Ascending aorta (tissue), 2 donors: ENCODE measurements at regions of chr12 and their contacts with region 1.

Region 1: GRCh38 chr12:79690638-79691493 is at the start of gene PAWR:
- DNase-seq: peak in 1 of 2 donors; percentile 81
- H3K4me3 ChIP-seq: peak within 1 kb of the TSS; percentile 96 to 99
- H3K27ac ChIP-seq: peak within 1 kb of the TSS; percentile 93 to 99
- H3K4me1 ChIP-seq: peaks cover 0 to 7% of the 10 kb centered on the region in 2 donors
- H3K27me3 ChIP-seq: no peaks in the 10 kb centered on the region
- CTCF ChIP-seq: peak; percentile 2 to 44 (median 3)
- total RNA-seq, gene PAWR: 75.4 TPM

Region 2: DNA sequence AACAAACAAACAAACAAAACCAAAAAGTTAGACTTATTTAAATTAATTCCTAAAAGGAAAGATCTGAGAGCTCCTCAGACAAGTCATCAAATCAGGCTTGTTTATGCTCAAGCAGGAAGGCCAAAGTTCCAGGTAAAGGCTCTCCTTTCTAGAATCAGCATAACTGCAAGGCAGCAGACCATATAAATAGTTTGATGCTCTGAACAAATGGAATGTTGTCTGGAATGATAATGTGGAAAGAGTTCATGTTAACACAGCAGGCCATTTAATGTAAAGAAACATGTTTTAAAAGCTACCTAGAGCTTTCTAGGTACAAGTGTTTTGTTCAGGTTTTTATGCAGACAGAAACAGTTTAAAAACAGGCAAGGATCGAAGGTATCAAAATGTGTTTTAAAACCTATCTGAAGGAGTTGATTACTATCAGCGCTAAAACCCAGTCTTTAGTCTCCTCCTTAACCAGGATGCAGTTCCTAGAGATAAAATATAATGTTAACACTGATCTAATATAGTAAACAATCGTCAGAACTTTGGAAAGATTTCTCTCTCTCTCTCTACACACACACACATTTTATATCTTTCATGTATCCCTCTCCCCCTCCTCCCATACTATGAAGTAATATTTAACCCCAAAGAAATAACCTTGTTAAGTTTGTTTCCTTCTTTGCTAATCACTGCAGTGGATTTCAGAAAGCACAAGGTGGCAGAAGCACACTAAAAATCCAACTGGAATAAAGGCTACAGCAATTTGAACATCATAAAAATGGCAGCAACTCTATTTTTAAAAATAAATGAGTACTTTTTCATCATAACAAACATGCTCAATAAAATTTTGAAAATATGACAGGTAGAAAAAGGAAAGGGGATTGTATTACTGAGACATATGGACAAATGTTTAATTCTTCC is 135.6 kb before region 1 on chr12:
- intact Hi-C with region 1: loop called (anchors 2 kb)
- DNase-seq: no peak
- H3K4me3 ChIP-seq: no peak overlapping the region
- H3K27ac ChIP-seq: peak overlapping the region; percentile 67 to 76
- H3K4me1 ChIP-seq: peaks cover 3 to 59% of the 10 kb centered on the region in 2 donors
- H3K27me3 ChIP-seq: no peaks in the 10 kb centered on the region
- CTCF ChIP-seq: peak; percentile 38 to 70 (median 61)

Region 3: GRCh38 chr12:79658221-79658620 is 32.6 kb before region 1 on chr12:
- intact Hi-C with region 1: no loop called
- DNase-seq: no peak
- H3K4me3 ChIP-seq: no peak overlapping the region
- H3K27ac ChIP-seq: no peak overlapping the region
- H3K4me1 ChIP-seq: peaks cover 0 to 10% of the 10 kb centered on the region in 2 donors
- H3K27me3 ChIP-seq: no peaks in the 10 kb centered on the region
- CTCF ChIP-seq: no peak

Region 4: GRCh38 chr12:79873201-79873600 is 182.3 kb after region 1 on chr12:
- intact Hi-C with region 1: no loop called
- DNase-seq: no peak
- H3K4me3 ChIP-seq: no peak overlapping the region
- H3K27ac ChIP-seq: no peak overlapping the region
- H3K4me1 ChIP-seq: peaks cover 0 to 33% of the 10 kb centered on the region in 2 donors
- H3K27me3 ChIP-seq: no peaks in the 10 kb centered on the region
- CTCF ChIP-seq: no peak

Region 5: GRCh38 chr12:79897617-79898016 is 206.8 kb after region 1 on chr12:
- intact Hi-C with region 1: loop called (anchors 10 kb)
- DNase-seq: no peak
- H3K4me3 ChIP-seq: no peak overlapping the region
- H3K27ac ChIP-seq: peak overlapping the region in 1 of 2 donors; percentile 10
- H3K4me1 ChIP-seq: peaks cover 9 to 57% of the 10 kb centered on the region in 2 donors
- H3K27me3 ChIP-seq: no peaks in the 10 kb centered on the region
- CTCF ChIP-seq: no peak